ENCODE measurements at regions of chr18 and their contacts with region 1.

Region 1: GRCh38 chr18:26839609-26840008 is 25.9 kb downstream of the AQP4 start:
- DNase-seq: no peak

Region 2: DNA sequence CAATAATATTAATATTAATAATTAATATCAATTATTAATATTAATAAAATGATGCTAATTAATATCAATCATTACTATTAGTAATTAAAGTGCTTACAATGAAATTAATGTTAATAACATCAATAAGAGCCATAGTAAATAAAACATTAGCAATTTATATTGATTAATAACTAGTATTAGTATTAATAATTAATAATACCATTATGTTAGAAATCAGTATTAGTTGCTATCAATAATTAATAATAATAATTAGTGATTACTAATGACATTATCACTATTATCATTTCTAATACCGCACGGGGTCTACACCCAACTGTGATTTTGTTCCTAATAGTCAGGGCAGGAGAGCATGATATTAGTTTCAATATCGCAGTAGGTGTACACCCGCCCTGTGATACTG is 48.6 kb after region 1 on chr18:
- intact Hi-C with region 1: loop called (anchors 10 kb)
- DNase-seq: no peak

Measured in cardiac septum (tissue), 1 donor.